CD8-positive, alpha-beta T cell (primary cell): ENCODE measurements at regions of chr3 and their contacts with region 1.

Region 1: DNA sequence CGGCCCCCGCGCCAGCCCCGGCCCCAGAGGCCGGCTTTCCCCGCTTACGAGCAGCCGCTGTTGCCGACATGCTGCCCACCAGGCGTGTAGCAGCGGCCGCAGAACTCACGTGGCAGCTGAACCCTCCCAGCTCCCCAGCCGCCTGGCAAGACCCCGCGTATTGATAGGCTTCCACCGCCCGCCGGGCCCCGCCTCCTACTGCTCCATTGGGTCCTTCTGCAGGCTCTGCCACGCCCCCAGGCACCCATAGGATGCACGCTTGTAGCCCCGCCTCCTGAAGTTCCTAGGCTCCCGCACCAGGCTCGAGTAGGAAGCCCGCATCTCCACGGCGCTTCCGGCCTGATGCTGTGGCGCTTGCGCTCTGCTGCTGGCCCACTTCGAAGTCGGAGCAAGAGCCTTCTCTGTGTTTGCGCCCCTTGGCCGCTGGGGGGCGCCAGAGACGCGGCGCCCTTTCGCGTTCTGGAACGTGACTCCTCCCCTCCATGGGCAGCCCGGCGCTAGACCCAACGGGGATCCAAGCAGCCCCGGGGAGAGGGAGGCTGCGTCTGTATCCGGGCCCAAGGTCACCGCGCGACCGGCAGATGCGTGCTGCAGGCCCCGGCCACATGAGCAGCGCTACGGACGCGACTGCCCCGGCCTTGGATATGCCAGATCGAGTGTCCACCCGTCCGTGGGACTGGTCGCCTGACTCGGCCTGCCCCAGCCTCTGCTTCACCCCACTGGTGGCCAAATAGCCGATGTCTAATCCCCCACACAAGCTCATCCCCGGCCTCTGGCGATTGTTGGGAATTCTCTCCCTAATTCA is at the starts of genes PARP3 and RRP9:
- DNase-seq: peak; percentile 98 to 100 (median 99)
- ATAC-seq: peak; percentile 93
- H3K4me3 ChIP-seq: peak within 1 kb of the TSS; percentile 78 to 80
- H3K4me3 Mint-ChIP-seq: peak within 1 kb of the TSS; percentile 94
- H3K27ac ChIP-seq: peak within 1 kb of the TSS; percentile 63 to 83
- H3K27ac Mint-ChIP-seq: peak within 1 kb of the TSS; percentile 90
- H3K4me1 ChIP-seq: peaks cover 31% of the 10 kb centered on the region
- H3K4me1 Mint-ChIP-seq: peaks cover 38% of the 10 kb centered on the region
- H3K27me3 ChIP-seq: no peaks in the 10 kb centered on the region
- H3K27me3 Mint-ChIP-seq: no peaks in the 10 kb centered on the region
- CTCF ChIP-seq: peak; percentile 92
- total RNA-seq, gene PARP3: 6.3 to 6.7 TPM
- total RNA-seq, gene RRP9: 8.1 to 8.3 TPM

Region 2: DNA sequence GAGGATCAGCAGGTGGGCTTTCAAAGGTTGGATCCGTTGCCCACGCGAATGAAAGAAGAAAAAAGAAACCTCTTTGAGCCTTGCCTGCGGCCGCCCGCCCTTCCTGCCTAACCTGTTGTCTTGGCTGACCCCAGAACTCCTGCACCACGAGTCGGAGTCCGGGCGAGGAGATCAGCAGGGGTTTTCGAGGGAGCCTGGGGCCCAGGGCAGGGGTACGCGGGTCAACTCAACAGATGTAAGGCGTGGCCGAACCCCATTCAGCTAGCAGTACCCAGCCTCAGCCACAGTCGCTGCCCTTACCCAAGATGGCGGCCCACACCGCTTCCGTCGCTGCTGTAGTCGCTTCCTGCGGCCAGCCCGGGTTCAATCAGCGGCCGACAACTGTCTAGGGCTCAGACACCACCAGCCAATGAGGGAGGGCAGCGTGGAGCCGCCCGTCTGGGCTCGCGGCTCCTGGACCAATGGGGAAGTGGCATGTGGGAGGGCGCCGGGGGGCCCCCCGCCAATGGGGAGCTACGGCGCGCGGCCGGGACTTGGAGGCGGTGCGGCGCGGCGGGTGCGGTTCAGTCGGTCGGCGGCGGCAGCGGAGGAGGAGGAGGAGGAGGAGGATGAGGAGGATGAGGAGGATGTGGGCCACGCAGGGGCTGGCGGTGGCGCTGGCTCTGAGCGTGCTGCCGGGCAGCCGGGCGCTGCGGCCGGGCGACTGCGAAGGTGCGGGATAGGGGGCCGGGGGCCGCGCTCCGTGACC is 557.1 kb before region 1 on chr3 and contains the start of gene MANF:
- CTCF ChIA-PET with region 1: no interaction called
- POLR2A ChIA-PET with region 1: no interaction called
- intact Hi-C with region 1: loop called in 1 of 2 experiments (anchors 5 kb)
- DNase-seq: peak; percentile 94 to 99 (median 97)
- ATAC-seq: peak; percentile 93
- H3K4me3 ChIP-seq: peak within 1 kb of the TSS; percentile 86 to 94
- H3K4me3 Mint-ChIP-seq: peak within 1 kb of the TSS; percentile 99
- H3K27ac ChIP-seq: peak within 1 kb of the TSS; percentile 90 to 93
- H3K27ac Mint-ChIP-seq: peak within 1 kb of the TSS; percentile 100
- H3K4me1 ChIP-seq: peaks cover 35% of the 10 kb centered on the region
- H3K4me1 Mint-ChIP-seq: peaks cover 44% of the 10 kb centered on the region
- H3K27me3 ChIP-seq: no peaks in the 10 kb centered on the region
- H3K27me3 Mint-ChIP-seq: no peaks in the 10 kb centered on the region
- CTCF ChIP-seq: no peak
- total RNA-seq, gene MANF: 32.2 to 35.0 TPM

Region 3: GRCh38 chr3:51953445-51953844 is 11.4 kb after region 1 on chr3:
- CTCF ChIA-PET with region 1: interaction called, 12 read pairs
- POLR2A ChIA-PET with region 1: interaction called, 3 read pairs
- intact Hi-C with region 1: no loop called
- DNase-seq: no peak
- ATAC-seq: no peak
- H3K4me3 ChIP-seq: no peak overlapping the region
- H3K4me3 Mint-ChIP-seq: no peak overlapping the region
- H3K27ac ChIP-seq: no peak overlapping the region
- H3K27ac Mint-ChIP-seq: no peak overlapping the region
- H3K4me1 ChIP-seq: peaks cover 7% of the 10 kb centered on the region
- H3K4me1 Mint-ChIP-seq: peaks cover 5% of the 10 kb centered on the region
- H3K27me3 ChIP-seq: peaks cover 3 to 11% of the 10 kb centered on the region in 2 experiments
- H3K27me3 Mint-ChIP-seq: peaks cover 18% of the 10 kb centered on the region
- CTCF ChIP-seq: no peak

Region 4: DNA sequence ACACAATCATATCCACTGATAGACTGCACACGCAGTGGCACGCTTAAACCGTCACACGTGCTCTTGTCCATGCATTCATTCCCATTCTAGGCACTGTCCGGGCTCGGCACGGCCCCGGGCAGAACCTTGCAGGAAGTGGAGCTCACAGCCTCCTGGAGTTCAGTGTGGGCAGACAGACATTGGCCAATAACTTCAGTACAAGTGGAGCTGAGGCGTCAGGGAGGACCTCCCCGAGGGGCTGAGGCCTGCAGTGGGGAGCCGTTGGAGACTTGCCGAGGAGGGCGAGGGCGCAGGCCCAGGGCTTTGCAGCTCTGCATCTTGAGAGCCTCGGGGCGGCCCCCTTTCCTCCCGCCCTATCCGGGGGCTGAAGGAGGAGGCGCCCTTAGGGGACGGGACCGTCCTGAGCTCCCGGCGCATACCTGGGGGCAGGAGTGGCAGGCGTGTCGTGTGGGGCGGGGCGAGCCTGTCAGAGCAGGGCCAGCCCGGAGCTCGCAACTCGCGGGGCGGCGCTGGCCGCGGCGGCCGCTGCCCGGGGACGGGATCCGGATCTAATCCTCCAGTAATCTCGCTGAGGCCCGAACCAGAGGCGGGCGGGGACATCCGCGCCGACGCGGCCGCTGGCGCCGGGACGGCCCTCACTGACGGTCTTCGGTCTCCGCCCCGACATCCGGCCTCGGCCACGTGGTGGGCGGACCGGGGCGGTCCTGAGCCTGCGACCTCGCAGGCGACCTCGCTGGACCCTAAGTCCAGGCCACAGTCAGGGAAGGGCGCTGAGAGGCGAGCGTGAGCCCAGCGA is 41.0 kb after region 1 on chr3 and contains the start of gene ACY1:
- CTCF ChIA-PET with region 1: interaction called, 3 read pairs
- POLR2A ChIA-PET with region 1: interaction called, 6 read pairs
- intact Hi-C with region 1: loop called in 1 of 2 experiments (anchors 2 kb)
- DNase-seq: peak; percentile 26 to 82 (median 70)
- ATAC-seq: peak; percentile 89
- H3K4me3 ChIP-seq: peak within 1 kb of the TSS; percentile 51 to 68
- H3K4me3 Mint-ChIP-seq: peak within 1 kb of the TSS; percentile 94
- H3K27ac ChIP-seq: peak within 1 kb of the TSS; percentile 52 to 92
- H3K27ac Mint-ChIP-seq: peak within 1 kb of the TSS; percentile 86
- H3K4me1 ChIP-seq: peaks cover 10% of the 10 kb centered on the region
- H3K4me1 Mint-ChIP-seq: peaks cover 21% of the 10 kb centered on the region
- H3K27me3 ChIP-seq: no peaks in the 10 kb centered on the region
- H3K27me3 Mint-ChIP-seq: no peaks in the 10 kb centered on the region
- CTCF ChIP-seq: no peak
- total RNA-seq, gene ACY1: 3.8 to 4.0 TPM

Region 5: DNA sequence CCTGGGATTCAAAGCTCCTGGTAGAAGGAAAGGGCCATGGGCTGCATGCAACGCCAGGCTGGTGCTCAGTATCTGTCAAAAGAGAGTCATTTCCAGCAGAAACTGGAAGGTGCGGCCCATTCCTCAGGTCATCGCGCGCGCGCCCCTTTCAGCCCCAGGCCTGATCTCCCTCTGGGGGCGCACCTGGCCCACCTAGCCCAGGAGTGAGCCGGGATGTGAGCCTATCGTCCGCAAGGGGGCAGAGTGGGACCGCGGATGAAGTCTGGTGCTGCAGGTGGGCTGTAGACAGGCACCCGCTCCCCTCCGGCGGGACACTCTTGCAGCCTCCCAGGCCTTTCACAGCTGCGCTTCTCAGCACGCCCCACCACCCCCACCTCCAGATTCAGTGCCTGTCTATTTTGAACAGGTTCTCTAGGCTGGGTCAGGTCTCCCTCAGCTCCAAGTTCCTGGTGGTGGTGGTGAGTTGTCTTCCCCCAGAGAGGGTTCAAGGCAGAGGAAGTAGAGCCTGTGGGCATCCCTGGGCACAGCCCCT is 59.5 kb after region 1 on chr3:
- CTCF ChIA-PET with region 1: interaction called, 11 read pairs
- POLR2A ChIA-PET with region 1: no interaction called
- intact Hi-C with region 1: loop called in 1 of 2 experiments (anchors 1 kb)
- DNase-seq: peak; percentile 77 to 94 (median 89)
- ATAC-seq: peak; percentile 99
- H3K4me3 ChIP-seq: no peak overlapping the region
- H3K4me3 Mint-ChIP-seq: no peak overlapping the region
- H3K27ac ChIP-seq: no peak overlapping the region
- H3K27ac Mint-ChIP-seq: no peak overlapping the region
- H3K4me1 ChIP-seq: peaks cover 13% of the 10 kb centered on the region
- H3K4me1 Mint-ChIP-seq: peaks cover 14% of the 10 kb centered on the region
- H3K27me3 ChIP-seq: no peaks in the 10 kb centered on the region
- H3K27me3 Mint-ChIP-seq: no peaks in the 10 kb centered on the region
- CTCF ChIP-seq: peak; percentile 87

Region 6: GRCh38 chr3:52144034-52144795 is 202.2 kb after region 1 on chr3:
- CTCF ChIA-PET with region 1: interaction called, 5 read pairs
- POLR2A ChIA-PET with region 1: no interaction called
- intact Hi-C with region 1: loop called (anchors 1 kb)
- DNase-seq: peak; percentile 74 to 92 (median 90)
- ATAC-seq: peak; percentile 100
- H3K4me3 ChIP-seq: no peak overlapping the region
- H3K4me3 Mint-ChIP-seq: no peak overlapping the region
- H3K27ac ChIP-seq: no peak overlapping the region
- H3K27ac Mint-ChIP-seq: peak overlapping the region; percentile 27
- H3K4me1 ChIP-seq: peaks cover 7% of the 10 kb centered on the region
- H3K4me1 Mint-ChIP-seq: peaks cover 7% of the 10 kb centered on the region
- H3K27me3 ChIP-seq: no peaks in the 10 kb centered on the region
- H3K27me3 Mint-ChIP-seq: no peaks in the 10 kb centered on the region
- CTCF ChIP-seq: peak; percentile 92

Region 7: DNA sequence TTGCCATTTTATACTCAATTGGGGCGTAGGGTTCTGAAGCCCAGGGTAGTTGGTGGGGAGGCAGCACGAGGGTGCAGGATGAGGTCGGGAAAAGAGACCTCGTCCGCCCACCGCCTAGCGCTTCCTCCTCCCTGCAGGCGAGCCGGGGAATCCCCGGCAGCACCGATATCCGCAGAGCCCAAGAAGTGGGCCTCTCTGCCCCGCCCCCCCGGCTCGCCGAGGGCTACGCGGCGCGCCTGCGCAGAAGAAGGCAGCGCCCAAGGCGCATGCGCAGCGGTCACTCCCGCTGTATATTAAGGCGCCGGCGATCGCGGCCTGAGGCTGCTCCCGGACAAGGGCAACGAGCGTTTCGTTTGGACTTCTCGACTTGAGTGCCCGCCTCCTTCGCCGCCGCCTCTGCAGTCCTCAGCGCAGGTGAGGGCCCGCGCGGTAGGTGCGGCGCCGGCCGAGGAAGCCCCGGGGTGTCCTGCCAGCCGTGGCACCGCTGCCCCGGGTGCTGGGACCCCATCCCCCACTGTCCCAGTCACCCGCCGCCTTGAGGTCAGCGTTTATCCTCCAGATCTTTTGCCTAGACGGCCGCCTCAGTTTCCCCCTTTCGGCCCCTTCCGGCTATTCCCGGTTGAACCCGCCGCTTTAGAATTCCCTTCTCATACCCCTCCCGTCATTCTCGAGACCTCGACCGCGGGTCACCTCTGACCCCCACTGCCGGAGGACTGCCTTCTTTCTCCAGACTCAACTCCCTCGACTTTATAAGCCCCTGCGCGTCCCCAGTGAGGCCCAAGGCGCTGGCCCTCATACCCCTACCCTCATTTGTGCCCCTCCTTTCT is 256.1 kb after region 1 on chr3 and contains the start of gene ALAS1:
- CTCF ChIA-PET with region 1: no interaction called
- POLR2A ChIA-PET with region 1: no interaction called
- intact Hi-C with region 1: loop called in 1 of 2 experiments (anchors 2 kb)
- DNase-seq: peak; percentile 86 to 98 (median 95)
- ATAC-seq: peak; percentile 98
- H3K4me3 ChIP-seq: peak within 1 kb of the TSS; percentile 88 to 93
- H3K4me3 Mint-ChIP-seq: peak within 1 kb of the TSS; percentile 96
- H3K27ac ChIP-seq: peak within 1 kb of the TSS; percentile 69 to 86
- H3K27ac Mint-ChIP-seq: peak within 1 kb of the TSS; percentile 94
- H3K4me1 ChIP-seq: peaks cover 32% of the 10 kb centered on the region
- H3K4me1 Mint-ChIP-seq: peaks cover 41% of the 10 kb centered on the region
- H3K27me3 ChIP-seq: no peaks in the 10 kb centered on the region
- H3K27me3 Mint-ChIP-seq: no peaks in the 10 kb centered on the region
- CTCF ChIP-seq: no peak
- total RNA-seq, gene ALAS1: 6.0 to 6.6 TPM

Region 8: DNA sequence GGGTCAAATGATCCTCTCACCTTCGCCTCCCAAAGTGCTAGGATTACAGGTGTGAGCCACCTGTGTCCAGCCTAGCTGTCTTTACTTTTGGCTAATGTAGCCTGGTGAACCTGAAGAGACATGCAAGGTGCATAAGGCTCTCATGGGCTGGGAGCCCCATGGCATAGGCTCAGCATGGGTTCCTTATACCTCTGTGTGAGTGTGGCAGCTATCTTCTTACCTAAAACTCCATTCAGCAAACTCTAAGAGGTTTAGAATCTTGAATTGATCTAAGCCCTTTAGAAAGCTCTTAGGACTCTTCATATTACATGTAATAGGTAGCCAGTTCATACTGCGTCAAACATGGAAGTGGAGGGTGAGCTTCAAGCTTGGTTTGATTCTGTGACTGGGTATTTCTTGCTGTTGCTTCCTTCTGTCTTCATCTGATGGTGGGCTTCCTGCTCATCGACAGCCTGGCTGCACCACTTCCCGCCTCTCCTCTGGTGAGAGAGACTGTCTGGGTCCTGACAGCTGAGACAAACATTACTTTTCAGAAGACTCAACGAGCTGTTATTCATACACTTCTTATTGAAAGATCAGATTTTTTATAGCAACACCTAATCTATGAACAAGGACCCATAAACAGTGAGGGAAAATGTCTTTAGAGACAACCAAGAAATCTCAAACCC is 1333.1 kb after region 1 on chr3:
- CTCF ChIA-PET with region 1: no interaction called
- POLR2A ChIA-PET with region 1: no interaction called
- intact Hi-C with region 1: no loop called
- DNase-seq: peak in 8 of 9 experiments; percentile 21 to 65 (median 40)
- ATAC-seq: peak; percentile 94
- H3K4me3 ChIP-seq: no peak overlapping the region
- H3K4me3 Mint-ChIP-seq: peak overlapping the region; percentile 10
- H3K27ac ChIP-seq: peak overlapping the region; percentile 29
- H3K27ac Mint-ChIP-seq: peak overlapping the region; percentile 92
- H3K4me1 ChIP-seq: peaks cover 11% of the 10 kb centered on the region
- H3K4me1 Mint-ChIP-seq: peaks cover 11% of the 10 kb centered on the region
- H3K27me3 ChIP-seq: no peaks in the 10 kb centered on the region
- H3K27me3 Mint-ChIP-seq: no peaks in the 10 kb centered on the region
- CTCF ChIP-seq: no peak